Head of caudate nucleus (tissue), 42 donors: ENCODE measurements at regions of chr11 and their contacts with region 1.

Region 1: GRCh38 chr11:123511037-123511870 is 81.2 kb downstream of the GRAMD1B start:
- DNase-seq: peak; percentile 85 to 97 (median 93)

Region 2: GRCh38 chr11:123549926-123550917 is 39.0 kb after region 1 on chr11:
- intact Hi-C with region 1: loop called (anchors 5 kb)
- DNase-seq: no peak

Region 3: GRCh38 chr11:123577081-123577598 is 65.9 kb after region 1 on chr11:
- intact Hi-C with region 1: loop called (anchors 2 kb)
- DNase-seq: peak; percentile 47 to 92 (median 82)